ENCODE measurements at regions of chr16 and their contacts with region 1.

Region 1: GRCh38 chr16:11255737-11256660 is at the start of gene SOCS1:
- DNase-seq: peak; percentile 73 to 94 (median 83)
- ATAC-seq: peak; percentile 62 to 72 (median 70)
- H3K4me3 ChIP-seq: peak within 1 kb of the TSS; percentile 83
- H3K4me3 Mint-ChIP-seq: peak within 1 kb of the TSS; percentile 92 to 96 (median 95)
- H3K27ac ChIP-seq: peak within 1 kb of the TSS; percentile 89
- H3K27ac Mint-ChIP-seq: peak within 1 kb of the TSS; percentile 93 to 99
- H3K4me1 ChIP-seq: peaks cover 41 to 66% of the 10 kb centered on the region in 2 experiments
- H3K4me1 Mint-ChIP-seq: peaks cover 52 to 65% (median 58%) of the 10 kb centered on the region in 3 donors
- H3K27me3 ChIP-seq: no peaks in the 10 kb centered on the region
- H3K27me3 Mint-ChIP-seq: no peaks in the 10 kb centered on the region
- total RNA-seq, gene SOCS1: 49.2 to 67.2 (median 54.5) TPM

Region 2: GRCh38 chr16:11224096-11224893 is 31.7 kb before region 1 on chr16:
- CTCF ChIA-PET with region 1: interaction called, 9 to 30 read pairs
- POLR2A ChIA-PET with region 1: interaction called, 9 to 19 read pairs
- DNase-seq: peak; percentile 26 to 77 (median 55)
- ATAC-seq: peak; percentile 47 to 66 (median 62)
- H3K4me3 ChIP-seq: peak overlapping the region in 1 of 2 donors; percentile 35
- H3K4me3 Mint-ChIP-seq: peak overlapping the region; percentile 69 to 77 (median 71)
- H3K27ac ChIP-seq: peak overlapping the region; percentile 89
- H3K27ac Mint-ChIP-seq: peak overlapping the region; percentile 97 to 99
- H3K4me1 ChIP-seq: peaks cover 17 to 43% of the 10 kb centered on the region in 2 experiments
- H3K4me1 Mint-ChIP-seq: peaks cover 45 to 54% (median 53%) of the 10 kb centered on the region in 3 donors
- H3K27me3 ChIP-seq: no peaks in the 10 kb centered on the region
- H3K27me3 Mint-ChIP-seq: no peaks in the 10 kb centered on the region

Region 3: DNA sequence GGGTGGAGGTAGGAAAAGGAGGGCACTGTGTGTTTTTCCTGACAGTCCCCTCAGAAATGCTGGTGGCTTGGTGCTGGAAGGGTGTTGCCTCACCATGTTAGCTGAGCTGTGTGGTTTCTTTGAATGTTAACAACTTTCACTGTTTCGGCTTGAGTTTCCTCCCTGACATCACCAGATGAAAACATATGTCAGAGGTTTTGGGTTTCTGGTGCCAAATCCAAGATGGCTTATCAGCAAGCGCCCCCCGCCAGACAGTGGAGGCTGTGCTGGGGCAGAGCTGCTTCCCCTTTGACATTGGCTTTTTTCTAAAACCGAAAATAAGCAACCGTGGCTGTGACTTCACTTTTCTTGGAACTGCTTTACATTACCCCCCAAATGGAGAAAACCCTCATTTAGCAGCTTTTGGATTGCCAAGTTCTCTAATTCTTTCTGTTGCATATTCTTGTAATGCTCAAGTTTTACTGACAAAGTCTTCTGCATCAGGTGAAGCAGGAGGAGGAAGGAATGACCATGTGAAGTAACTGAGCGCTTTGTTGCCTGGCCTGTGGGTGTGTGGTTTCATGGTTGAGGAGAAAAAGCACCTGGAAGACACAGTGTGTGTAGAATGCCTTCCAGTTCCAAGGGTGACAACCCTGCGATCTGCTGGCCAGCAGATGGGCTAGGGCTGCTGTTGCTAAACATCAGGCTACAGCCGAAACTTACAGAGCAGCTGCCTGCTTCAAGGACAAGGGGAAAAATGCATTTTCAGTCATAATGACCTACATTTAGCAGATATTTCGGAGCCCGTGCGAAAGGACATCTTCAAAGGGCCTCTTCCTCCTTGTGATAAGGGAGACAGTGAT is 99.0 kb after region 1 on chr16:
- CTCF ChIA-PET with region 1: interaction called in 1 of 2 experiments, 10 read pairs
- POLR2A ChIA-PET with region 1: interaction called, 4 to 7 read pairs
- DNase-seq: peak; percentile 32 to 87 (median 74)
- ATAC-seq: peak; percentile 83 to 94 (median 86)
- H3K4me3 ChIP-seq: peak overlapping the region; percentile 22 to 42
- H3K4me3 Mint-ChIP-seq: peak overlapping the region; percentile 49 to 77 (median 67)
- H3K27ac ChIP-seq: peak overlapping the region; percentile 63
- H3K27ac Mint-ChIP-seq: peak overlapping the region; percentile 85 to 94
- H3K4me1 ChIP-seq: peaks cover 24 to 39% of the 10 kb centered on the region in 2 experiments
- H3K4me1 Mint-ChIP-seq: peaks cover 36 to 53% (median 43%) of the 10 kb centered on the region in 3 donors
- H3K27me3 ChIP-seq: peaks cover 0 to 47% of the 10 kb centered on the region in 2 experiments
- H3K27me3 Mint-ChIP-seq: peaks cover 0 to 7% of the 10 kb centered on the region in 2 donors